H1 (cell line): ENCODE measurements at regions of chr6 and their contacts with region 1.

Region 1: DNA sequence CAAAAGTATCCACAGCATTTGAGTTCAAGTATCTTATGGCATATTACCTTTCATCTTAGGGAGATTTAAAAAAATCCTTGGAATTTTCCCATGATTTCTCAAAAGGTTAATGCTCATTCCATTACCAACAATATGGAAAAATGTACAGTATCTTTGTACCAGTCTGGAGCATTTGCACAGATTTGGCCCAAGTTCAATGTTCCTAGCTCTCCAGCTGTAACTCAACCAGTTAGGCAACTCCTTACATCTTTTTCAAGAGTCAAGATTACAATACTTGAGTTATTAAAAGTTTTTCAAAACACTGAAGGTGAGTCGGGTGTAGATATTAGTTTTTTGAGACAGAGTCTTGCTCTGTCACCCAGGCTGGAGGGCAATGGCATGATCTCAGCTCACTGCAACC is 1.0 kb downstream of the OR2J2 start:
- DNase-seq: no peak
- H3K4me3 ChIP-seq: no peak overlapping the region
- H3K27ac ChIP-seq: no peak overlapping the region
- H3K4me1 ChIP-seq: no peaks in the 10 kb centered on the region
- H3K27me3 ChIP-seq: no peaks in the 10 kb centered on the region
- CTCF ChIP-seq: no peak
- EP300 ChIP-seq: no peak
- POLR2A ChIP-seq: no peak
- RAD21 ChIP-seq: no peak

Region 2: GRCh38 chr6:29183594-29183993 is 11.9 kb after region 1 on chr6:
- CTCF ChIA-PET with region 1: interaction called, 10 read pairs
- POLR2A ChIA-PET with region 1: no interaction called
- DNase-seq: no peak
- H3K4me3 ChIP-seq: no peak overlapping the region
- H3K27ac ChIP-seq: no peak overlapping the region
- H3K4me1 ChIP-seq: no peaks in the 10 kb centered on the region
- H3K27me3 ChIP-seq: no peaks in the 10 kb centered on the region
- CTCF ChIP-seq: no peak
- EP300 ChIP-seq: no peak
- POLR2A ChIP-seq: no peak
- RAD21 ChIP-seq: no peak